RWPE1 (cell line): ENCODE measurements at regions of chr3 and their contacts with region 1.

Region 1: DNA sequence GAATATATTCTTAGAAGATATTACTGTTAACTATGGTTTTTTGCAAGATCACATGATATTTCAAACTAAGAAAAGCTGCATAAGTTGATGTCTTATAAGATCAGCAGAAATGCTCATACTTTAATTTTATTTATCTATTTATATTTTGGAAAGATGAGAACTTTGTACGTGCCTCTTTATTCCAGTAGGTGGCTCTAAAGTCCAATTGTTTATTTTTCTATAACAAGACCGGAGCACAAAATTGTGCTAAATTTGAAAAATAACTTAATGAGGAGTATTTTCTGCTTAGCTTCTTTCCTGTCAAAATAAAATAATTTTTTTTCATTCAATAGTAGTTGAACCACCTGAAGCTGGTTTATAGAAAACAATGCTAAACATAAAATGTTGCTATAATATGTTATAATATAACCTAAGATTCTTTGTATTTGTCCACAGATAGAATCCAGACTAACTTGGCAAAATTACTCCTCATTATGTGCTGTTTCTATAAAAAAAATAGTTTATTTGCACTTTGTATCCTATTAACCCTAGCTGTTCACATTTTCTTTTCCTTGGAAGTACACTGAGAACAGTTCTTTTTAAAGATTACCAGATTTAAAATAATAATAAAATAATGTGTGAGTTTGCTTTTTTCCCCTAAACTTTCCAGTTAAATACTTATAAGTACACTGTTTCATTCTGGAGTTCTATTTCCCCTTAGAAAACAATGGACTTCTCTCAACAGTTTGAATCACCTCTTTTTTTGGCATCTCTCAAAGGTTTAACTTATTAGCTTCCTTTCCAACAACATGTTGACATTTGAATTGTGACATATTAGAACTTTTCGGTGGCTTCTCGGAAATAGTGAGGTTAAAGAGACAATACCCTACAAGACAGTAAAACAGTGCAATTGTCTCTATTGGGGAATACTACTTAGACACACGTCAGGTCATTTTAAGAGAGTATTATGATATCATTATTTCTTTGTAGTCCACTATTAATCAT is 530.0 kb downstream of the MECOM start:
- DNase-seq: peak; percentile 9
- H3K27ac ChIP-seq: no peak overlapping the region
- CTCF ChIP-seq: peak; percentile 61

Region 2: GRCh38 chr3:169143506-169143905 is 10.0 kb after region 1 on chr3:
- CTCF ChIA-PET with region 1: no interaction called
- POLR2A ChIA-PET with region 1: no interaction called
- DNase-seq: no peak
- H3K27ac ChIP-seq: no peak overlapping the region
- CTCF ChIP-seq: no peak

Region 3: DNA sequence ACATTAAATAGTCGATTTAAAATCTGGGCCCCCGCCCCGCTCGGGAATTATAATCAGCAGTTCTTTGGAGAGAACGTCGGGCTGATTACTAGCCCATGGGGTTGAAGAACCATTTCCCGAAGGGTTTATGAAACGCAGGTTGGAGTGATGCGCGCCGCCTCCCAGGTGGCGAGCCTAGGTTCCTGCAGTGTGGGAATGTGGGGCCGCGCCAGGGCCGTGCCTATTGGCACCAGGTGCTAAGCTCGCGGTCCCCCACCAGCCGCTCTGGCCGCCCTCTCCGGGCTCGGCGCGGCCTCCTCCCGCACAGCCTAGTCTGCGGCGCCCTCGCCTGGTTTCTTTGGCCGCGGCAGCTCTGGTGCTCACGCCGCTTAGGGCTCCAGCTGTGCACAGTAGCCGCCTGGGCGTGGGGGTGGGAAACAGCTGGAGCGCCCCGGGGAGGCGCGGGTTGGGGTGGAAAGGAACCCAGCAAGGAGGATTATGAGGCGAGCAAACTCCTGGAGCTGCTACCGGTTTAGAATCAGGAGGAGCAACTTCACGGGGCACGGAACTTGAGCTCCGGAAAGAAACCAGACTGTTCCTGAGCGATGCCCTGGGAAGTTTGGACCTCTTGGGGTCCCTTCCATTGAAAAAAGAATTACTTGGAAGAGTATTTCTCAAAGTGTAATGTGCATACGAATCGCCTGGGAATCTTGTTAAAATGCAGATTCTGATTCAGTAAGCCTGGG is 535.6 kb after region 1 on chr3:
- CTCF ChIA-PET with region 1: interaction called, 19 read pairs
- POLR2A ChIA-PET with region 1: no interaction called
- DNase-seq: peak; percentile 60
- H3K27ac ChIP-seq: peak overlapping the region; percentile 27; the same call in 1 of the 2 replicates
- CTCF ChIP-seq: peak; percentile 92